ENCODE measurements at regions of chr13 and their contacts with region 1.

Region 1: GRCh38 chr13:46295491-46296114 is 83.9 kb downstream of the LRRC63 start:
- DNase-seq: peak in 8 of 9 donors; percentile 28 to 90 (median 88)
- ATAC-seq: peak; percentile 94
- H3K4me3 ChIP-seq: peak overlapping the region; percentile 12
- H3K4me3 Mint-ChIP-seq: peak overlapping the region; percentile 4 to 87 (median 76)
- H3K27ac ChIP-seq: peak overlapping the region; percentile 77
- H3K27ac Mint-ChIP-seq: peak overlapping the region; percentile 92 to 99 (median 96)
- H3K4me1 ChIP-seq: peaks cover 35 to 52% of the 10 kb centered on the region in 2 donors
- H3K4me1 Mint-ChIP-seq: peaks cover 36 to 73% (median 68%) of the 10 kb centered on the region in 7 donors
- H3K27me3 ChIP-seq: no peaks in the 10 kb centered on the region
- H3K27me3 Mint-ChIP-seq: no peaks in the 10 kb centered on the region

Region 2: GRCh38 chr13:46211483-46212351 is 83.9 kb before region 1 on chr13 and contains the start of gene LRRC63:
- CTCF ChIA-PET with region 1: no interaction called
- POLR2A ChIA-PET with region 1: interaction called, 10 read pairs
- intact Hi-C with region 1: loop called in 1 of 2 experiments (anchors 1 kb)
- DNase-seq: peak; percentile 69 to 88 (median 80)
- ATAC-seq: peak; percentile 98
- H3K4me3 ChIP-seq: peak within 1 kb of the TSS; percentile 81
- H3K4me3 Mint-ChIP-seq: peak within 1 kb of the TSS; percentile 83 to 100 (median 93)
- H3K27ac ChIP-seq: peak within 1 kb of the TSS; percentile 88
- H3K27ac Mint-ChIP-seq: peak within 1 kb of the TSS; percentile 91 to 98 (median 94)
- H3K4me1 ChIP-seq: peaks cover 5 to 8% of the 10 kb centered on the region in 2 donors
- H3K4me1 Mint-ChIP-seq: peaks cover 7 to 37% (median 26%) of the 10 kb centered on the region in 7 donors
- H3K27me3 ChIP-seq: no peaks in the 10 kb centered on the region
- H3K27me3 Mint-ChIP-seq: peaks cover 0 to 6% (median 0%) of the 10 kb centered on the region in 5 donors
- total RNA-seq, gene LRRC63: 0.19 to 0.80 (median 0.49) TPM

Region 3: GRCh38 chr13:46315491-46316075 is 20.0 kb after region 1 on chr13:
- CTCF ChIA-PET with region 1: interaction called, 108 read pairs
- POLR2A ChIA-PET with region 1: interaction called, 33 read pairs
- intact Hi-C with region 1: loop called in 1 of 2 experiments (anchors 1 kb)
- DNase-seq: no peak
- ATAC-seq: no peak
- H3K4me3 ChIP-seq: no peak overlapping the region
- H3K4me3 Mint-ChIP-seq: no peak overlapping the region
- H3K27ac ChIP-seq: no peak overlapping the region
- H3K27ac Mint-ChIP-seq: peak overlapping the region in 5 of 9 donors; percentile 0 to 43 (median 3)
- H3K4me1 ChIP-seq: peaks cover 10 to 16% of the 10 kb centered on the region in 2 donors
- H3K4me1 Mint-ChIP-seq: peaks cover 20 to 60% (median 43%) of the 10 kb centered on the region in 7 donors
- H3K27me3 ChIP-seq: no peaks in the 10 kb centered on the region
- H3K27me3 Mint-ChIP-seq: no peaks in the 10 kb centered on the region

Region 4: DNA sequence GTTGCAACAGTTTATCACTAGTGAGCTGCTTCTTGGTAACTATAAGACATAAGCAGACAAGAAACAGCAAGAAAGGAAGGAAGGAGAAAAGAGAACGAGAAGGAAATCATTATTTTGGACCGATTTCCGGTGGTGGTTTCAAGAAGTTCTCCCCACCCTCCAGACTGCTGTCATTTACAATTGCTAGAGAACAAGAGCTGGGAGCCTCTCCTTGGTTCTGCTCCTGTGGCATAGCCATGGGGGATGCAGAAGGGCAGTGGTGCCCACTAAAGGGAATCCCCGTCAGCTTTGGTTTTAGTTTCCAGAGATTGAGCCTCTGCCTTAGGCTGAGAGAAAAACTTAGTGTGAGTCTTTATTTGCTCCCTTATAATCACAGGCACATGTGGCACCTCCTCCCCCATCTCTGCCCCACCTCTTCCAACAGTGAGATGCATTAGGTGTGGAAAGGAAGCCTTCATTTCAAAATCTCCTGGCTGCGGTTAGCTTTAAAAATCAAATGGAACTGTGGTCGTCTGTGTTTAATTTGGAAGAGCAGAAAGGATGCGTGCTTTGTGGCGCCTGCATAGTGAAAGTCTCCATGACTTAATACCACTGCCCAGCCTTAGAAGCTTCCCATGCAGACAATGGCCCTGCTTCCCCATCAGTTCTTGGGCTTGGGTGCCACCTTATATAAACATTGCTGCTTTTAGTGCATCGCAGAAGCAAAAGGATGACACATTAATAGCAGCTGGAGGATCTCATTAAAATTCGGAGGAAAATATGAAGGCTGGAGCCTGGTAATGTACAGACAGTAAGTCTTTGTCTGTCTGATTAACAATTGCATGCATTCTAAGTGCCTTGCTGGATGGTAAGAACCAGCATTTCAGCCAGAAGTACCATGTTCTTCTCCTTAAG is 282.3 kb after region 1 on chr13:
- CTCF ChIA-PET with region 1: no interaction called
- POLR2A ChIA-PET with region 1: no interaction called
- intact Hi-C with region 1: no loop called
- DNase-seq: no peak
- ATAC-seq: peak; percentile 32
- H3K4me3 ChIP-seq: no peak overlapping the region
- H3K4me3 Mint-ChIP-seq: peak overlapping the region in 7 of 10 donors; percentile 10 to 66 (median 46)
- H3K27ac ChIP-seq: no peak overlapping the region
- H3K27ac Mint-ChIP-seq: peak overlapping the region in 5 of 9 donors; percentile 1 to 81 (median 9)
- H3K4me1 ChIP-seq: peaks cover 3 to 11% of the 10 kb centered on the region in 2 donors
- H3K4me1 Mint-ChIP-seq: peaks cover 36 to 82% (median 67%) of the 10 kb centered on the region in 7 donors
- H3K27me3 ChIP-seq: no peaks in the 10 kb centered on the region
- H3K27me3 Mint-ChIP-seq: no peaks in the 10 kb centered on the region